Activated naive CD4-positive, alpha-beta T cell treated with anti-CD3 and anti-CD28 coated beads for 36 hours (primary cell): ENCODE measurements at regions of chr20 and their contacts with region 1.

Region 1: DNA sequence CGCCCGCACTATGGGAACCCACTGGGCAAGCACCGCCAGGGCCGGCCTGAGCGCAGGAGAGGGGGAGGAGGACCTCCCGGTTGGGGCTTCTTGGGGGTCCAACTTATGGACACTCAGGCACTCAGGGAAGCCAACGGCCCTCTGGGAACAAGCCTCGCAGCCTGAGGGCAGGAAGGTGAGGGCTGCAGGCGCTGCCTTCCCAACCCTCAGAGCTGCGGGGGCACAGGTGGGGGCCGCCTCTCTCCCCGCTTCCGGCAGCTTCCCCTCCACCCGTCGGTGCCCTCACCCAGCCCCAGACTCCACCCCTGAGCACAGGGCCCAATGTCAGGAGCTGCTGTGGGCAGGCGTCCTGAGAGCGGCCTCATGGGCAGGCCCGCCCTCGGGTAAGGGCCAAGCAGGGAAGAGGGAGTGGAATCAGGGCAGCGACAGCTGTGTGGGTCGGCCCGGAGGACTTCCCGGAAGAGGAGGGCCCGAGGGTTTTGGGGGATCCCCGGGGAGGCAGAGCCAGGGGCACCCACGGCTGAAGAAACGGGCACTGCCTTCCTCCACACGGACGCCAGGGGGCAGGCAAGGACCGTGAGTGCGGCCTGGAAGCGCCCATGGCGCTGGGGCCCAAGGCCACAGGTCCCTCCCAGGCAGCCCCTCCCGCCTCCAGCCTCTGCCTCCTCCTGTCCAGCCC is 488 bp upstream of the PTK6 start:
- DNase-seq: peak; percentile 98
- H3K4me3 Mint-ChIP-seq: peak overlapping the region; percentile 74
- H3K27ac Mint-ChIP-seq: peak overlapping the region; percentile 84
- H3K4me1 Mint-ChIP-seq: peaks cover 11% of the 10 kb centered on the region
- H3K27me3 Mint-ChIP-seq: no peaks in the 10 kb centered on the region

Region 2: GRCh38 chr20:63520504-63520933 is 17.1 kb before region 1 on chr20 and contains the start of gene PPDPF:
- CTCF ChIA-PET with region 1: interaction called, 6 read pairs
- intact Hi-C with region 1: loop called (anchors 1 kb)
- DNase-seq: peak; percentile 81
- H3K4me3 Mint-ChIP-seq: peak within 1 kb of the TSS; percentile 75
- H3K27ac Mint-ChIP-seq: peak within 1 kb of the TSS; percentile 69
- H3K4me1 Mint-ChIP-seq: peaks cover 8% of the 10 kb centered on the region
- H3K27me3 Mint-ChIP-seq: peaks cover 2% of the 10 kb centered on the region
- total RNA-seq, gene PPDPF: 189 to 194 TPM

Region 3: GRCh38 chr20:63627129-63627750 is 89.6 kb after region 1 on chr20:
- CTCF ChIA-PET with region 1: interaction called, 4 read pairs
- intact Hi-C with region 1: loop called (anchors 10 kb)
- DNase-seq: peak; percentile 94
- H3K4me3 Mint-ChIP-seq: peak overlapping the region; percentile 99
- H3K27ac Mint-ChIP-seq: peak overlapping the region; percentile 74
- H3K4me1 Mint-ChIP-seq: peaks cover 52% of the 10 kb centered on the region
- H3K27me3 Mint-ChIP-seq: no peaks in the 10 kb centered on the region

Region 4: DNA sequence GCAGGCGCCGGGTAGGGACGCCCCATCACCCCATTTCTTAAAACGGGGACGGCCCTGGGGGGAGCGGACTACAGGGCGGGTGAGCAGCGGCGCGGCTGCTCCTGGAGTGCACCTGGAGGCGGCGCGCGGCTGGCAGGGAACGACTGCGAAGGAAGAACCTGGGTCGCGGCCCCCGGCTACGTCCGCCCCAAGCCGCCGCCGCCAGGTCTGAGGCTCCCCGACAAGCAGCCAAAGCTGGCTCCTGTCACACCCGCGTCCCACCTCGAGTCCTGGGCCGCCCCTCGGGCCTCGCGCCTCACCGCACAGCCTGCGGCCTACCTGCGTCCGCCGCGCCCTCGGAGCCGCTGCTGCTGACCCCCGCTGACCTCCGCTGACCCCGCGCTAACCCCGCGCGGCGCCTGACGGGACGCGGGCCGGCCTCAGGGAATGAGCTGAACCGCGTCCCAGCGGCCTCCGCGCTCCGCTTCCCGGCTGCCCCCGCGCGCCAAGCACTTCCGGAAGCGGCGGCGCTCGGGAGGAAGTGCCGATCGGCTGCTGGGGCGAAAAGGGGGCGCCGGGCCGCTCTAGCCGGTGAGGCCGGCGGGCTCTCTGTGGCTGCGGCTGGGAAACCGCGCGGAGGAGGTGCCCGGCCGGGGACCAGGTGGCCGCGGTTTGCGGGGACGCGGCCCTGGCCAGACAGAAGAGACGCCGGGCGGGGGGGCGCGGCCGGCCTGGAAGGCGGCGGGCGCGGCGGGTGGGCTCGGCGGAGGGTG is 170.1 kb after region 1 on chr20 and contains the starts of genes ARFRP1 and ZGPAT:
- CTCF ChIA-PET with region 1: interaction called, 4 read pairs
- intact Hi-C with region 1: loop called (anchors 1 kb)
- DNase-seq: peak; percentile 90
- H3K4me3 Mint-ChIP-seq: peak within 1 kb of the TSS; percentile 80
- H3K27ac Mint-ChIP-seq: peak within 1 kb of the TSS; percentile 86
- H3K4me1 Mint-ChIP-seq: peaks cover 46% of the 10 kb centered on the region
- H3K27me3 Mint-ChIP-seq: no peaks in the 10 kb centered on the region
- total RNA-seq, gene ARFRP1: 45.6 to 49.2 TPM
- total RNA-seq, gene ZGPAT: 15.3 to 18.0 TPM

Region 5: GRCh38 chr20:63864847-63865640 is 327.4 kb after region 1 on chr20 and contains the start of gene TPD52L2:
- CTCF ChIA-PET with region 1: interaction called, 7 read pairs
- intact Hi-C with region 1: loop called (anchors 1 kb)
- DNase-seq: peak; percentile 99
- H3K4me3 Mint-ChIP-seq: peak within 1 kb of the TSS; percentile 87
- H3K27ac Mint-ChIP-seq: peak within 1 kb of the TSS; percentile 94
- H3K4me1 Mint-ChIP-seq: peaks cover 24% of the 10 kb centered on the region
- H3K27me3 Mint-ChIP-seq: no peaks in the 10 kb centered on the region
- total RNA-seq, gene TPD52L2: 38.2 to 38.9 TPM

Region 6: GRCh38 chr20:63980806-63981728 is 443.4 kb after region 1 on chr20 and contains the start of gene PRPF6:
- CTCF ChIA-PET with region 1: interaction called, 4 read pairs
- intact Hi-C with region 1: loop called (anchors 2 kb)
- DNase-seq: peak; percentile 97
- H3K4me3 Mint-ChIP-seq: peak within 1 kb of the TSS; percentile 84
- H3K27ac Mint-ChIP-seq: peak within 1 kb of the TSS; percentile 94
- H3K4me1 Mint-ChIP-seq: peaks cover 52% of the 10 kb centered on the region
- H3K27me3 Mint-ChIP-seq: no peaks in the 10 kb centered on the region
- total RNA-seq, gene PRPF6: 39.4 to 40.2 TPM